CD8-positive, alpha-beta T cell (primary cell): ENCODE measurements at regions of chr16 and their contacts with region 1.

Region 1: GRCh38 chr16:3234543-3235541 is at the start of gene ZNF200:
- DNase-seq: peak; percentile 85 to 97 (median 95)
- ATAC-seq: peak; percentile 85
- H3K4me3 ChIP-seq: peak within 1 kb of the TSS; percentile 82 to 99
- H3K4me3 Mint-ChIP-seq: peak within 1 kb of the TSS; percentile 96
- H3K27ac ChIP-seq: peak within 1 kb of the TSS; percentile 94 to 96
- H3K27ac Mint-ChIP-seq: peak within 1 kb of the TSS; percentile 98
- H3K4me1 ChIP-seq: peaks cover 21% of the 10 kb centered on the region
- H3K4me1 Mint-ChIP-seq: peaks cover 40% of the 10 kb centered on the region
- H3K27me3 ChIP-seq: no peaks in the 10 kb centered on the region
- H3K27me3 Mint-ChIP-seq: no peaks in the 10 kb centered on the region
- CTCF ChIP-seq: no peak
- total RNA-seq, gene ZNF200: 12.5 to 14.1 TPM

Region 2: DNA sequence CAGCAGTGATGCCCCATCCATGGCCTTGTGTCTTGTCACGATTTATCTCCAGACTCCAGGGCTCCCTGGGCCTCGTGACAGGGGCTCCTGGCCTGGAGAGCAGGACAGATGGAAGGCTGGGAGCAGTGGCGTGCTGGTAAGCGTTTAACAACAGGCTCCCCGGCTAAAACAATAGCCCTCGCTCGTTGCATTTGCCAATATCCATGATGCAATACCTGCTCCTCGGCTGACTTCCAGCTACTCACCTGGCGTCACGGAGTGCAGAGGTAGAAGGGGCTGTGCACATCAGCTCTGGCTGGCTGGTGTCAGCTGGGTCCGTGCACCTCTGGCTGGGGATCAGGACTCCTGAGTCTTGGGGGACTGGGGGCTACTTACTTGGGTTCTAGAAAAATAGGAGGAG is 196.6 kb before region 1 on chr16:
- CTCF ChIA-PET with region 1: no interaction called
- POLR2A ChIA-PET with region 1: no interaction called
- intact Hi-C with region 1: no loop called
- DNase-seq: peak in 1 of 9 experiments; percentile 18
- ATAC-seq: no peak
- H3K4me3 ChIP-seq: no peak overlapping the region
- H3K4me3 Mint-ChIP-seq: no peak overlapping the region
- H3K27ac ChIP-seq: no peak overlapping the region
- H3K27ac Mint-ChIP-seq: no peak overlapping the region
- H3K4me1 ChIP-seq: peaks cover 9% of the 10 kb centered on the region
- H3K4me1 Mint-ChIP-seq: peaks cover 4% of the 10 kb centered on the region
- H3K27me3 ChIP-seq: peaks cover 48 to 59% of the 10 kb centered on the region in 2 experiments
- H3K27me3 Mint-ChIP-seq: peaks cover 56% of the 10 kb centered on the region
- CTCF ChIP-seq: no peak

Region 3: GRCh38 chr16:3182608-3183444 is 52.0 kb before region 1 on chr16:
- CTCF ChIA-PET with region 1: interaction called, 14 read pairs
- POLR2A ChIA-PET with region 1: no interaction called
- intact Hi-C with region 1: loop called in 1 of 2 experiments (anchors 2 kb)
- DNase-seq: peak in 6 of 9 experiments; percentile 38 to 74 (median 64)
- ATAC-seq: peak; percentile 64
- H3K4me3 ChIP-seq: peak overlapping the region; percentile 38 to 43
- H3K4me3 Mint-ChIP-seq: peak overlapping the region; percentile 78
- H3K27ac ChIP-seq: no peak overlapping the region
- H3K27ac Mint-ChIP-seq: peak overlapping the region; percentile 66
- H3K4me1 ChIP-seq: peaks cover 19% of the 10 kb centered on the region
- H3K4me1 Mint-ChIP-seq: peaks cover 19% of the 10 kb centered on the region
- H3K27me3 ChIP-seq: peaks cover 31 to 38% of the 10 kb centered on the region in 2 experiments
- H3K27me3 Mint-ChIP-seq: peaks cover 65% of the 10 kb centered on the region
- CTCF ChIP-seq: no peak

Region 4: DNA sequence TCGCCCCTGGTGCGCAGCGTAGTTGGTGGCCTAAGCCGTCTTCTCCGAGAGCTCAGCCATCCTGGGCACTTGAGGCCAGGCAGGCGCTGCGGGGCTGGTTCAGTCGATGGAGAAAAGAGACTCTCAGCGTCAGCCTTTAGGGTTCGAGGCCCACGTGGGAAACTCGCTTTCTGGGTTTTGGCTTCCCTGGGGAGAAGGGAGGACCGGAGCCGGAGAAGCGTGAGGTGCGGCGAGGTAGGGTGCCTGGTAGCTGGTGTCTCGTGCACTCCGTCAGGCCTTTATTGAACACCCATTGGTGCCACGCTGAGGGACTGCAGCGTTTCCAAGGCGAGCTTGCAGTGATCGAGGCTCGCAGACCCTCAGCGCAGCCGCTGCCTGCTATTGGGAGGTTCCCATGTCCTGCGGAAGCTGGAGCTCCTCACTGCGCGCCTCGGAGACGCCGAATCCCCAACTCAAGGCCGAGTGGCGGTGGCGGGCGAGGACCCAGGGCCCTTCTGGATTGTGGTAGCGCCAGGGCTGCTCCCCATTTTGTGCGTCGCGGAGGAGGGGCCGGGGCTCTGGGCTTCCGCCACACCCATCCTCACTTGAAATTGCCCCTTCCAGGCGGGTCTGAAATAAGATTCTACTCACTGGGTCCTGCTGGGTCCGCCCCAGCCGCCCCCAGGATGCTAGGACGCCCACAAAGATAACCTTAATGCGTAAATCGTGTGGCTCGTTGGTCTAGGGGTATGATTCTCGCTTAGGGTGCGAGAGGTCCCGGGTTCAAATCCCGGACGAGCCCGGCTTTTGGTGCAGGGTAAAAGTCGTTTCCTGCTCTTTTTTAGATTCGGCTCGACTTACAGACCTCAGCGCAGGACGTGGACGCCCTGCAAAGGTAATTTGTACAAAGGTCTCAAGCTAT is 45.7 kb before region 1 on chr16:
- CTCF ChIA-PET with region 1: interaction called, 14 read pairs
- POLR2A ChIA-PET with region 1: interaction called, 5 read pairs
- intact Hi-C with region 1: loop called in 1 of 2 experiments (anchors 5 kb)
- DNase-seq: peak in 4 of 9 experiments; percentile 46 to 59 (median 51)
- ATAC-seq: peak; percentile 41
- H3K4me3 ChIP-seq: peak overlapping the region; percentile 26 to 50
- H3K4me3 Mint-ChIP-seq: peak overlapping the region; percentile 70
- H3K27ac ChIP-seq: no peak overlapping the region
- H3K27ac Mint-ChIP-seq: no peak overlapping the region
- H3K4me1 ChIP-seq: peaks cover 38% of the 10 kb centered on the region
- H3K4me1 Mint-ChIP-seq: peaks cover 40% of the 10 kb centered on the region
- H3K27me3 ChIP-seq: peaks cover 50 to 55% of the 10 kb centered on the region in 2 experiments
- H3K27me3 Mint-ChIP-seq: peaks cover 66% of the 10 kb centered on the region
- CTCF ChIP-seq: no peak

Region 5: GRCh38 chr16:3214904-3215600 is 19.8 kb before region 1 on chr16:
- CTCF ChIA-PET with region 1: no interaction called
- POLR2A ChIA-PET with region 1: interaction called, 14 read pairs
- intact Hi-C with region 1: loop called (anchors 1 to 2 kb)
- DNase-seq: peak in 8 of 9 experiments; percentile 3 to 86 (median 50)
- ATAC-seq: peak; percentile 86
- H3K4me3 ChIP-seq: peak overlapping the region in 1 of 2 experiments; percentile 40
- H3K4me3 Mint-ChIP-seq: peak overlapping the region; percentile 62
- H3K27ac ChIP-seq: peak overlapping the region; percentile 59 to 83
- H3K27ac Mint-ChIP-seq: peak overlapping the region; percentile 99
- H3K4me1 ChIP-seq: peaks cover 31% of the 10 kb centered on the region
- H3K4me1 Mint-ChIP-seq: peaks cover 39% of the 10 kb centered on the region
- H3K27me3 ChIP-seq: no peaks in the 10 kb centered on the region
- H3K27me3 Mint-ChIP-seq: no peaks in the 10 kb centered on the region
- CTCF ChIP-seq: no peak

Region 6: GRCh38 chr16:3223913-3224515 is 10.8 kb before region 1 on chr16:
- CTCF ChIA-PET with region 1: no interaction called
- POLR2A ChIA-PET with region 1: interaction called, 13 read pairs
- intact Hi-C with region 1: no loop called
- DNase-seq: no peak
- ATAC-seq: no peak
- H3K4me3 ChIP-seq: no peak overlapping the region
- H3K4me3 Mint-ChIP-seq: no peak overlapping the region
- H3K27ac ChIP-seq: no peak overlapping the region
- H3K27ac Mint-ChIP-seq: no peak overlapping the region
- H3K4me1 ChIP-seq: no peaks in the 10 kb centered on the region
- H3K4me1 Mint-ChIP-seq: no peaks in the 10 kb centered on the region
- H3K27me3 ChIP-seq: no peaks in the 10 kb centered on the region
- H3K27me3 Mint-ChIP-seq: no peaks in the 10 kb centered on the region
- CTCF ChIP-seq: no peak

Region 7: GRCh38 chr16:3305109-3306068 is 70.5 kb after region 1 on chr16 and contains the starts of genes TIGD7 and ZNF75A:
- CTCF ChIA-PET with region 1: no interaction called
- POLR2A ChIA-PET with region 1: no interaction called
- intact Hi-C with region 1: loop called (anchors 1 kb)
- DNase-seq: peak; percentile 60 to 94 (median 83)
- ATAC-seq: peak; percentile 97
- H3K4me3 ChIP-seq: peak within 1 kb of the TSS; percentile 90 to 93
- H3K4me3 Mint-ChIP-seq: peak within 1 kb of the TSS; percentile 83
- H3K27ac ChIP-seq: peak within 1 kb of the TSS; percentile 86 to 91
- H3K27ac Mint-ChIP-seq: peak within 1 kb of the TSS; percentile 90
- H3K4me1 ChIP-seq: peaks cover 14% of the 10 kb centered on the region
- H3K4me1 Mint-ChIP-seq: peaks cover 30% of the 10 kb centered on the region
- H3K27me3 ChIP-seq: no peaks in the 10 kb centered on the region
- H3K27me3 Mint-ChIP-seq: no peaks in the 10 kb centered on the region
- CTCF ChIP-seq: no peak
- total RNA-seq, gene TIGD7: 4.1 to 4.2 TPM
- total RNA-seq, gene ZNF75A: 59.6 to 61.3 TPM

Region 8: GRCh38 chr16:3457434-3458252 is 222.8 kb after region 1 on chr16:
- CTCF ChIA-PET with region 1: no interaction called
- POLR2A ChIA-PET with region 1: no interaction called
- intact Hi-C with region 1: loop called in 1 of 2 experiments (anchors 1 kb)
- DNase-seq: peak; percentile 78 to 96 (median 90)
- ATAC-seq: peak; percentile 84
- H3K4me3 ChIP-seq: peak overlapping the region; percentile 71 to 72
- H3K4me3 Mint-ChIP-seq: peak overlapping the region; percentile 85
- H3K27ac ChIP-seq: peak overlapping the region; percentile 76 to 89
- H3K27ac Mint-ChIP-seq: peak overlapping the region; percentile 93
- H3K4me1 ChIP-seq: peaks cover 42% of the 10 kb centered on the region
- H3K4me1 Mint-ChIP-seq: peaks cover 52% of the 10 kb centered on the region
- H3K27me3 ChIP-seq: no peaks in the 10 kb centered on the region
- H3K27me3 Mint-ChIP-seq: no peaks in the 10 kb centered on the region
- CTCF ChIP-seq: peak; percentile 49